ENCODE measurements at regions of chr2 and their contacts with region 1.

Region 1: DNA sequence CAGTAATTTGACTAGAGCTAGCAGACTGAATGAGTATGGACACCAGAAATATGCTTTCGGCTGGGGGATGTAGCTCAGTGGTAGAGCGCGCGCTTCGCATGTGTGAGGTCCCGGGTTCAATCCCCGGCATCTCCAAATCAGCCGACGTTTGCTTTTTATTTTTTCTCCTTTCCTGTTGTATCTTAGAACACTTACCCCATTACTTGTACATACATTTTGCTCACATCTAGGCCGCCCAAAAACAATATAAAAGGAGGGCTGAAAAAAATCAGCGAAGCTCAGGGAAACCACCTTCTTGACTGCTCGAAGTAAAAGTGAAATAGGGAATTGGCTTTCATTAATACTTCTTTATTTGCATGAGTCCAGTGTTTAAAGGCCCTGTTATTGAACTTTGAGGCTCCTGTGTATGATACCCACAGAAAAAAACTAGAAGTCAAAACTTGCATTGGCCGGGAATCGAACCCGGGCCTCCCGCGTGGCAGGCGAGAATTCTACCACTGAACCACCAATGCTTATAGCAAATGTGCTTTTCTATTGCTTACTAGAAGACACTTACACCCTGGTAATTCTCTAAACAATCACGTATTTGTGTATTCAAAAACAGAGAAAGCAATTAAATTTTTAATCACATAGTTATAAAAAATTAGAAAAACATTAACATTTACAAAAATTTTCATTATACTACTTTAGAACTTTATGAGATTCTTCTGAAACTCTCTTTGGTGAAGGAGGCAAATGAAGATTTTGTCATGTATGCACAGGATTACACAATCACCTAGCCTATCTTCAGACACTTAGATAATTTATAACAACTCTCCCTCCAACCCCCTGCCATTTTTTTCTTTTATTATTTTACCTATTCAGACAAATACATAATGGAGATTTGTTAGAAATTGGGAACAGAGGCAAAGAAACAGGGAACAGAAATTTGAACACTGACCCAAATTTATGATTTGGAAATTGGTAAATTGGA is 35.2 kb upstream of the GPD2 start:
- DNase-seq: peak; percentile 85
- H3K4me3 ChIP-seq: peak overlapping the region; percentile 76
- H3K27ac ChIP-seq: peak overlapping the region; percentile 87
- H3K4me1 ChIP-seq: no peaks in the 10 kb centered on the region
- H3K27me3 ChIP-seq: no peaks in the 10 kb centered on the region
- CTCF ChIP-seq: no peak

Region 2: DNA sequence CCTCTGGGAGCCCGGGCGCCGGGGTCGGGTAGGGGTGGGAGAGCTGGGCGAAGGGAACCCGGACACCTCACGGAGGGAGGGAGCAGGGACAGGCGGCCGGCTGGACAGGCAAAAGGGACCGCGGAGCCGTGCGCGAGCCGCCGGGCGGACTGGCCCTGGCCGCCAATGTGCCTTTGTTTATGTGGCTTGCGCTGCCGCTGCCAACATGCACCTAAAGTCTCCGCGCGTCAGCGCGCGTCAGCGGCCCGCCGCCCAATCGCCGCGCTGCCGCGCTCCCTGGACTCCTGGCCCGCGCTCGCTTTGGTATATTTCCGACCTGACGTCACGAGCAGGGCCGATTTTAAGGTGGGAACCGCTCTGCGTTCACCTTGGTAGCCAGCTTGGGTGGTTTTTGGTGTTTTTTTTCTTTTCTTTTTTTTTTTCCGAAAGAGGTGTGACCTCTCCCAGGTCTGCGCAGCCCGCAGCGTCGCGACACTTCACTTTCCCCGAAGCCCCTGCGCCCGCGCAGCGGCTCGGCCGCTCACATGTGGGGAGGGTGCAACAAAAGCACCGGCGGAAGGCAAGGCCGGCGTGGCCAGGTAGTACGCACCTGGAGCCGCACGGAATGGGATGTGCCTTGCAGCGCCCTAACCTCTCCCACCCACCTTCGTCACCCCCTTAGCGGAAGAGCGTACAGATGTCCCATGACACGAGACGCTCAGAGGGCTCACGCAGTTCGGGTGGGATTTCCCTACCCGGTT is 68.3 kb before region 1 on chr2 and contains the start of gene NR4A2:
- CTCF ChIA-PET with region 1: no interaction called
- POLR2A ChIA-PET with region 1: interaction called, 19 read pairs
- intact Hi-C with region 1: loop called (anchors 2 kb)
- DNase-seq: peak; percentile 87
- H3K4me3 ChIP-seq: peak within 1 kb of the TSS; percentile 79
- H3K27ac ChIP-seq: peak within 1 kb of the TSS; percentile 91
- H3K4me1 ChIP-seq: peaks cover 20% of the 10 kb centered on the region
- H3K27me3 ChIP-seq: no peaks in the 10 kb centered on the region
- CTCF ChIP-seq: no peak
- total RNA-seq, gene NR4A2: 1.1 and 1.8 TPM in 2 replicates